ENCODE measurements at regions of chr5 and their contacts with region 1.

Region 1: GRCh38 chr5:61280205-61280604 is 51.9 kb upstream of the ZSWIM6 start:
- DNase-seq: peak; percentile 89
- H3K4me3 ChIP-seq: no peak overlapping the region
- H3K27ac ChIP-seq: no peak overlapping the region
- H3K4me1 ChIP-seq: peaks cover 39% of the 10 kb centered on the region
- H3K27me3 ChIP-seq: no peaks in the 10 kb centered on the region
- CTCF ChIP-seq: no peak
- POLR2A ChIP-seq: no peak

Region 2: GRCh38 chr5:61313960-61314681 is 33.9 kb after region 1 on chr5:
- CTCF ChIA-PET with region 1: interaction called, 8 read pairs
- POLR2A ChIA-PET with region 1: interaction called, 3 read pairs
- dilution Hi-C with region 1: no loop called
- intact Hi-C with region 1: loop called (anchors 1 kb)
- DNase-seq: peak; percentile 97
- H3K4me3 ChIP-seq: no peak overlapping the region
- H3K27ac ChIP-seq: peak overlapping the region; percentile 95
- H3K4me1 ChIP-seq: peaks cover 57% of the 10 kb centered on the region
- H3K27me3 ChIP-seq: no peaks in the 10 kb centered on the region
- CTCF ChIP-seq: no peak
- POLR2A ChIP-seq: peak; percentile 73

Region 3: DNA sequence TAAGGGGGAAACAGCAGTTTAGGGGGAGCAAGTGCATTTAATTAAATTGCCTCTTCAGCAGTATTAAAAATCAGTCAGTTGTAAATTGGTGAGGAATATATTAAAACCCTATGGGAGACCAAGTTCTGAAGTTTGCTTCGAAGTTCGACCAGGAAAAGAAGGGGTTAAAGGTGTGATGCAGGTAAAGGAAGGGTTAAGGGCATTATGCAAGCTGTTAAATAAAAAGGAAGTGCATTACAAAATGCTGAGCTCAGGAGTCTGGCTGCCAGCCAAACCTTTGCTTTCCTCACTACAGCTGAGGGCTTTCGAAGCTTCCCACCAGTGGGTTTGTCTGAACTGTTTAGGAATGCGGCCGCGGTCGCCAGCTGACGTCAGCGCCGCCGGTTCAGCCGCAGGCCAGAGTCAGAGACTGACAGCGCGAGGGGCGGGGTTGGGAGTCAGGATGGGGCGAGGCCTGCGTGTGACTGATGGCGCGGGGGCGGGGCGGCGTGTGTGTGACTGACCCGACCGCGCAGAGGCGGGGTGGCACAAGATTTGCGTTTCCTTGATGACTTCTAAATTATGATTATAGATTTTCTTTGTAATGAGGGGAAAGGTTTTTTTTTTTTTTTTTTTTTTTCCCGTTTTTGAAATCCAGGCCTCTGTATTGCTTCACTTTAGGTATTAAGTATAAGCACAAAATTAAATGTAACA is 128.4 kb after region 1 on chr5:
- CTCF ChIA-PET with region 1: interaction called, 3 read pairs
- POLR2A ChIA-PET with region 1: no interaction called
- dilution Hi-C with region 1: no loop called
- intact Hi-C with region 1: loop called (anchors 5 kb)
- DNase-seq: peak; percentile 99
- H3K4me3 ChIP-seq: peak overlapping the region in 2 of 3 experiments; percentile 15 to 63
- H3K27ac ChIP-seq: peak overlapping the region; percentile 97
- H3K4me1 ChIP-seq: peaks cover 21% of the 10 kb centered on the region
- H3K27me3 ChIP-seq: no peaks in the 10 kb centered on the region
- CTCF ChIP-seq: no peak
- POLR2A ChIP-seq: peak; percentile 52

Region 4: DNA sequence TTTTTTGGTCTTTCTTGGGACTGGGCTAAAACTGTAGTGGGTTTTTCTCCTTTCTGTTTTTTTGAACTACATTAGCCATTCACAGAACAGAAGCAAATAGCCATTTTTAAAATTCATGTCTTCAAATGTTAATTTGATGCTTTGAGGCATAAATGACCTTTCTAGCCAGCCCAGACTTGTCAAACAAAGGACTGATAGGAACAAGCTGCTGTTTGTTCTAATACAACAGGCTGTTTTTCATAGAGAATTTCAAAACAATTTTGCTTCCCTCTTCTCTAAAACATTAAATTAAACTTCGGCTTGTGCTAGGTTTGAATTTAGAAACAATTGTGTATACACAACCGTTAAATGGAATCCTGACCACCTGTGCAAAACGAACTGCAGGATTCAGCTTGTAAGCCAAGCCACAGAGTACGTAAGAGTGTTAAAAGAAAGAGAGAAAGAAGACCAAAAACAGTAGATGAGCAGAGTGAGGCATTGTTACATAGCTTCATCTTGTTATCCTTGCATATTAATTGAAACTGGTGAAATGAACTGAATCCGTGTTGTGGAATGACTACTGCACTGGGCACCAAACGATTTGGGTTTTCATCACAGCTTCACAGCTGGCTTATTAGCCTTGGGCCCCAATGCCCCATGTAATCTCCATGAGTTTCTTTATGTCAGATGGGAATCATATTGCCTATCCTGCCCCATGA is 151.9 kb after region 1 on chr5:
- CTCF ChIA-PET with region 1: no interaction called
- POLR2A ChIA-PET with region 1: no interaction called
- dilution Hi-C with region 1: no loop called
- intact Hi-C with region 1: loop called (anchors 1 kb)
- DNase-seq: no peak
- H3K4me3 ChIP-seq: no peak overlapping the region
- H3K27ac ChIP-seq: no peak overlapping the region
- H3K4me1 ChIP-seq: peaks cover 7% of the 10 kb centered on the region
- H3K27me3 ChIP-seq: no peaks in the 10 kb centered on the region
- CTCF ChIP-seq: no peak
- POLR2A ChIP-seq: no peak

Region 5: DNA sequence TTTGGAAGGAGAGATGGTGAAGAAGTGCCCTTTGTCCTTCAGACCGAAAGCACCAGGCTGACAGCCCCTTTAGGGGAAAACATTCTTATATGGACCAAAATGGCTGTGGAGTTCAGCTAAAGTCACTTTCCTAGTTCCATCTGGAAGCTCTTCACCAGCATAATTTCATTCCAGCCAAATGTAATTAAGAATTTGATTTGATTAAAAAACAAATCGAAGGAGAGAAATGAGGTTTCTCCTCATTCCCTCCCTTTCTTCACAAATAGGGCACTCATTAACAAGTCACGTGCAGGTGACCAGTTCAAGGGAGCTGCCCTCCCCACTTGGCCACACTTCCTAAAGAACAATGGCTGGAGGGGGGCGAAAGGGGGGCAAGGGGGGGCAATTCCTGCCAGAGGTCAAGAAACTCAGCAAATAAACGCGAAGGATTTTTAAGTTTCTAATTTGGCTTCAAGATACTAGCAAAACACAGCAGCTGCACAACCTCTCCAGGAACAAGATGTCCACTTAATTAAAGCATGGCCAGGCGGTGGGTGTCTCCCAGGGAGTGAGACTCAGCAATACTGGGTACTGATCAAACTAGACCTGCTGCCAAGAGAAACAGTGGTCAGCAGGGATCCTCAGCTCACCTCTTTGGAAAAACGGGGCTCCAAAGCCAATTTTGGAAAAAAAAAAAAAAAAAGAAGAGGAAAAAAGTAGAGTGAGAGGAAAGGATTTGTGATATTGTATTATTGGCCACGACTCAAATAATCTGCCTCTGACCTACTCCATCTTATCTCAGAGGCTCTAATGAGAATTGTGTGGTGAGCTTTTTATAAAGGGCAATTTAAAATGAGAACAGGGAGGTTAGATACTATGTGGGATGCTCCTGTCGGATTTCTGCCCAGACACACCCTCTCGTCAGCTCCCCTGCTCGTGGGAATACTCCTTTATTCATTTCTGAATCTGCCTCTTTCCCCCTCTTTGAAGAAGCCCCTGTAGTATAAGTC is 306.2 kb after region 1 on chr5:
- CTCF ChIA-PET with region 1: no interaction called
- POLR2A ChIA-PET with region 1: no interaction called
- dilution Hi-C with region 1: no loop called
- intact Hi-C with region 1: no loop called
- DNase-seq: peak; percentile 23
- H3K4me3 ChIP-seq: no peak overlapping the region
- H3K27ac ChIP-seq: no peak overlapping the region
- H3K4me1 ChIP-seq: peaks cover 8% of the 10 kb centered on the region
- H3K27me3 ChIP-seq: peaks cover 17 to 29% of the 10 kb centered on the region in 2 experiments
- CTCF ChIP-seq: no peak
- POLR2A ChIP-seq: no peak